Activated CD8-positive, alpha-beta T cell treated with anti-CD3 and anti-CD28 coated beads for 36 hours (primary cell): ENCODE measurements at regions of chr9 and their contacts with region 1.

Region 1: GRCh38 chr9:128552153-128552743 is at the start of gene SPTAN1:
- DNase-seq: peak; percentile 95
- ATAC-seq: peak; percentile 87
- H3K4me3 Mint-ChIP-seq: no peak within 1 kb of the TSS
- H3K27ac Mint-ChIP-seq: peak within 1 kb of the TSS; percentile 93
- H3K4me1 Mint-ChIP-seq: peaks cover 42% of the 10 kb centered on the region
- H3K27me3 Mint-ChIP-seq: no peaks in the 10 kb centered on the region
- CTCF ChIP-seq: no peak
- total RNA-seq, gene SPTAN1: 178 to 183 TPM

Region 2: DNA sequence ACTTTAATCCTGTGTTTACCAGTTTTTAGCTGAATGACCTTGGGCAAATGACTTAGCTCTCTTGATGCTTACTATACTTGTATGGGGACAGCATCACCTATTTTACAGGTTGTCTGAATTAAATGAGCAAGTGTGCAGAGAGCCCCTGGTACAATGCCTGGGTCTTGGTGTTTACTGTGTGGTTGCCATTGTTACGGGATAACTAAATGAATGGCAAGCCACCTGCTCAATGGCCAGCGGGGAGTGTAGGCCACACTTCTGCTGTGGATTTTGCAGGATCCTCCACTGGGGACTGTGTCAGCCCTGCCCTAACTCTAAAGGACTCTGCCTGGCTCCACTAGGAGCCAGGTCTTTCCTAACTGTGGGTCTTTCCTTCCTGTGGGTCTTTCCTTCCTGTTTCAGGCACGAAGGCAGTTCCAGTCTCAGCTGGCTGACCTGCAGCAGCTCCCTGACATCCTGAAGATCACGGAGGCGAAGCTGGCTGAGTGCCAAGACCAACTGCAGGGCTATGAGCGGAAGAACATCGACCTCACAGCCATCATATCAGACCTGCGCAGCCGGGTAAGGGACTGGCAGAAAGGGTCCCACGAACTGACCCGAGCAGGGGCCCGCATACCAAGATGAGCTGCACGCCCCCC is 58.0 kb before region 1 on chr9:
- CTCF ChIA-PET with region 1: no interaction called
- POLR2A ChIA-PET with region 1: no interaction called
- intact Hi-C with region 1: no loop called
- DNase-seq: peak; percentile 16
- ATAC-seq: no peak
- H3K4me3 Mint-ChIP-seq: no peak overlapping the region
- H3K27ac Mint-ChIP-seq: no peak overlapping the region
- H3K4me1 Mint-ChIP-seq: no peaks in the 10 kb centered on the region
- H3K27me3 Mint-ChIP-seq: no peaks in the 10 kb centered on the region
- CTCF ChIP-seq: no peak

Region 3: DNA sequence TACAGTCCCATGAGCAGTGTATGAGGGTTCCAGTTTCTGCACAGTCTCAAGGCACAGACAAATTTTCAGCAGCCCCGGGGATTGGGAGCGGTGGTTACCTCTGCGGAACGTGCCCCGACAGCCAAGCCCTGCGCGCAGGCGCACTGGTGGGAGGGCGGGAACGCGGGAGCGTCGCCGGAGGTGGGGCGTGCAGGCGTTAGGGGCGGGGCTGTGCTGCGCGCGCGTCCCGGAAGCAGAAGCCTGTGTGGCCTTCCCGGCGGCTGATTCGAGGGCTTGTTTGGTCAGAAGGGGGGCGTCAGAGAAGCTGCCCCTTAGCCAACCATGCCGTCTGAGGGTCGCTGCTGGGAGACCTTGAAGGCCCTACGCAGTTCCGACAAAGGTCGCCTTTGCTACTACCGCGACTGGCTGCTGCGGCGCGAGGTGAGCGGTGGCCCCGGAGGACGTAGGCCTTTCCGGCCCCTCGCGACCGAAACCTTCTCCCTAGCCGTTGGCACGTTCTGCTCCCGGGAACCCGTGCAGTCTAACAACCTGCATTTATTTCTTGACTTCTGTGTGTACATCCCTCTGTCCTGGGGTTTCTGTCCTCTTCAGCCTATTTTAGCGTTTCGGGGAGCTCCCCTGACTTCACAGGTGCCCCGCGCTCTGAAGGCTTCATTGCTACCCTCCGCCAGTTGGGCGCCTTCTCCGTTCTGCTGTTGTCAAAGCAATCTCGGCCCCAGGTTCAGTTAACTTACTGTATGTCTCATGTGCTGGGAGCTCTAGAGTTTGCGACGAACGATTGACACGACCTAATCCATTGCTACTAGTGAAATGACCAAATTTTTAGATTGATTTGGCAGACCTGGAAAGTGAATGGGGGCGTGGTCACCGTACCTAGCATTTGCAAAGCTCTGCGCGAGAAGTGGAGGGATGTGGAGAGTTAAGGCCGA is 47.5 kb before region 1 on chr9 and contains the start of gene GLE1:
- CTCF ChIA-PET with region 1: no interaction called
- POLR2A ChIA-PET with region 1: interaction called, 18 read pairs
- intact Hi-C with region 1: loop called (anchors 5 kb)
- DNase-seq: peak; percentile 97
- ATAC-seq: peak; percentile 98
- H3K4me3 Mint-ChIP-seq: peak within 1 kb of the TSS; percentile 92
- H3K27ac Mint-ChIP-seq: peak within 1 kb of the TSS; percentile 99
- H3K4me1 Mint-ChIP-seq: peaks cover 30% of the 10 kb centered on the region
- H3K27me3 Mint-ChIP-seq: no peaks in the 10 kb centered on the region
- CTCF ChIP-seq: no peak
- total RNA-seq, gene GLE1: 46.8 to 48.2 TPM

Region 4: DNA sequence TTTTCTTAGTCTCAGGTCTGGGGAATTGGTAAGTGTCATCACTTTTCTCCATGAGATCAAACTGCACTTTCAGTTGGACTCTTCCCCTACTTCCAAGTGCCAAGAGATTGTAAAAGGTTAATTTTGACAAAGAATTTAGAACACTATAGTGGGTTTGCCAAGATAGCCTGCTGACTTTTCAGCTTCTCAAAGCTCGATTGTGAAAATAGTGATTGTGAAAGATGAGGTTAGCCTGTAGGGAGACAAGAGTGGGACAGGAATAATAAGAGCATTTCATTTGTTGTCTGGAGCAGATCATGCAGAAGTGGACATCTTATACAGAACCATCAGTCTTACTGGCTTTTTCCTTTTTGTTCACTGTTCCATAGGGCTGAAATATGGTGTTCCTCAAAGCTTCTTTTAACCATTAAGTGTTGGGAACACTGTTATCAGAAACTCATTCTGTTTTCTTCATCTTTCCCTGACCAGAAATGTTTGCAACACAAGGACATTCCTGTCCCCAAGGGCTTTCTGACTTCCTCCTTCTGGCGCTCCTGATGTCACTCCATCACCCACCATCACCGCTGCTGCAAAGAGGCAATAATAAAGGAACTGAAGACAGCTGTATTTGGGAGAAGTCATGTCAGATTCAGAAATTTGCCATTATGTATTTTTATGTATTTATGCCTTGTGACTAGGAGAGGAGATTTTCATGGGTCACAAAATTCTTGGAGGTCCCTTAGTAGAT is 11.5 kb before region 1 on chr9:
- CTCF ChIA-PET with region 1: interaction called, 9 read pairs
- POLR2A ChIA-PET with region 1: interaction called, 36 read pairs
- intact Hi-C with region 1: no loop called
- DNase-seq: no peak
- ATAC-seq: no peak
- H3K4me3 Mint-ChIP-seq: no peak overlapping the region
- H3K27ac Mint-ChIP-seq: no peak overlapping the region
- H3K4me1 Mint-ChIP-seq: peaks cover 6% of the 10 kb centered on the region
- H3K27me3 Mint-ChIP-seq: no peaks in the 10 kb centered on the region
- CTCF ChIP-seq: no peak

Region 5: GRCh38 chr9:128568470-128569078 is 16.3 kb after region 1 on chr9:
- CTCF ChIA-PET with region 1: no interaction called
- POLR2A ChIA-PET with region 1: interaction called, 12 read pairs
- intact Hi-C with region 1: no loop called
- DNase-seq: no peak
- ATAC-seq: no peak
- H3K4me3 Mint-ChIP-seq: no peak overlapping the region
- H3K27ac Mint-ChIP-seq: no peak overlapping the region
- H3K4me1 Mint-ChIP-seq: peaks cover 19% of the 10 kb centered on the region
- H3K27me3 Mint-ChIP-seq: no peaks in the 10 kb centered on the region
- CTCF ChIP-seq: no peak

Region 6: DNA sequence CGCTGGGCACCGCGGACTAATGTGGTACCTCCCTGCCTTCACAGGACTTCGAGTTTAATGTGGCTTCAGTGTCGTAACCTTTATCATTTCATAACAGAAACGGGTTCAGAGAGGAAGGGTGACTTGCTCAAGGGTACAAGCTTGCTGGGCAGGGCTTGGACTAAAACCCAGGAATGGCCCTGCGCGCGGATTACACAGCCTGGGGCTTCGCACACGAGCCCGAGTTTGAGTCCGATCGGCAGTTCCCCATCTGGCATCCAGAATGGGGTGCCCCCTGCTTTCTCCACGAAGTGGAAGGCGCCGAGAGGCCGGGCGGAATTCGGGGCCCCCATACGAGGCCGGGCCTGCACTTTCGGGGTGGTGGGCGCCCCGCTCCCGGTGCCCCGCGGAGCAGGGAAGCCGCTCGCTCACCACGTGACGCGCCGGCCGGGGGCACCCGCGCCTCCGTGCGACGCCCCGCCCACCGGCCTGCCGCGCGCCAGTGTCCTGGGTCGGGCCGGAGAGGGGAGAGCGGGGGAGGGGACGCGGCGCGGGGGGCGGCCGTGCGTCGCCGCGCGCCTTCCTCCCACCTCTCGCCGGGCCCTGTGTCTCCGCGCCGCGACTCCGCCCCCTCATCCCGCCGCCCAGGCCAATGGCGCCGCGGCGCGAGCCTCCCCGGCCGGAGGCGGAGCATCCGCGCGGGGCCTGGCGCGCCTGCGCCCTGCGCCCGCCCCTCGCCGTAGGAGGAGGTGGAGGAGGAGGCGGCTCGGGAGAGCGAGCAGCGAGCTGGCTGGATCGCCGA is 136.5 kb after region 1 on chr9 and contains the start of gene SET:
- CTCF ChIA-PET with region 1: no interaction called
- POLR2A ChIA-PET with region 1: interaction called, 13 read pairs
- intact Hi-C with region 1: no loop called
- DNase-seq: peak; percentile 94
- ATAC-seq: peak; percentile 78
- H3K4me3 Mint-ChIP-seq: peak within 1 kb of the TSS; percentile 98
- H3K27ac Mint-ChIP-seq: peak within 1 kb of the TSS; percentile 98
- H3K4me1 Mint-ChIP-seq: peaks cover 60% of the 10 kb centered on the region
- H3K27me3 Mint-ChIP-seq: no peaks in the 10 kb centered on the region
- CTCF ChIP-seq: no peak
- total RNA-seq, gene SET: 749 to 755 TPM

Region 7: DNA sequence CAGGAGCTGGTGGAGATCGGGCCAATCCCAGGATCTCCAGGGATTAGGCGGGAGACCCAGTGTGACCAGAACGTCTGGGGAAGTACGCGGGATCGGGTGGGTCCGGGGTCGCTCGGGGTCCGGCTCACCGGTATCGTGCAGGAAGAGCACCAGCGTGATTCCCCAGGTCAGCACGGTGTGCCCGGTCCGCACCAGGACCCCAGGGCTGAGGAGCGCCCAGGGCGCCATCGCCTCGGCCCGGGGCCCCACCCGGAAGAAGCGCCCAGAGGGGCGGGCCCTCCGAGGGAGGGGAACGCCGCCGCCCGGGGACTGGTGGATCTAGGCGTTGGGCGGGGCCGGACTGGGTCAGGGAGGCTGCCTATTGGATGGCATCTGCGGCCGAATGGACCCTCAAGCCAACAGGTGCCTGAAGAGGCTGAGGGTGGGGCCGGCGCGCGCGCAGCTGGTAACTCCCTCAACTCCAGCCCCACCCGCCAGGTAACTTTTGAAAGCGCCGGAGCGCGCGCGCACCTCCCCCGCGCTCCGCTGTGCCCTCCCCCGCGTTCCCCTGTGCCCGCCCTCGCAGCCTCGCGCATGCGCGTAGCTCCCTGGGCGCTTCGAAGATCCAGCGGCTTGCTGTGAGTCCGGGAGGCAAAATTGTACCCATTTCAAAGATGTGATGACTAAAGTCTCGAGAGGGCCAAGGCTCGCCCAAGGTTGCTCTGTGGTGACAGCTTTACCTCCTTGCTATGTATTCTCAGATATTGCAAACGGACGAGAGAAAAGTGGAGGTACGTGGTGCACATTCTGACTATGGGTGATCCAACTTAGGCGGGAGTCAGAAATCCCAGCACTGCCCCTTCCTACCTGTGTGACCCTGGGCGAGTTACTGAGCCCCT is 171.9 kb after region 1 on chr9 and contains the start of gene ZDHHC12:
- CTCF ChIA-PET with region 1: no interaction called
- POLR2A ChIA-PET with region 1: interaction called, 10 read pairs
- intact Hi-C with region 1: no loop called
- DNase-seq: peak; percentile 100
- ATAC-seq: peak; percentile 99
- H3K4me3 Mint-ChIP-seq: peak within 1 kb of the TSS; percentile 99
- H3K27ac Mint-ChIP-seq: peak within 1 kb of the TSS; percentile 96
- H3K4me1 Mint-ChIP-seq: peaks cover 33% of the 10 kb centered on the region
- H3K27me3 Mint-ChIP-seq: no peaks in the 10 kb centered on the region
- CTCF ChIP-seq: no peak
- total RNA-seq, gene ZDHHC12: 44.9 to 48.7 TPM